Panc1 (cell line): ENCODE measurements at regions of chr2 and their contacts with region 1.

Region 1: GRCh38 chr2:25991965-25992364 is 9.7 kb upstream of the KIF3C start:
- DNase-seq: no peak
- ATAC-seq: peak; percentile 67
- H3K4me3 ChIP-seq: no peak overlapping the region
- H3K27ac ChIP-seq: peak overlapping the region; percentile 40
- H3K4me1 ChIP-seq: peaks cover 6% of the 10 kb centered on the region; the same call in 1 of the 2 replicates
- H3K27me3 ChIP-seq: no peaks in the 10 kb centered on the region
- CTCF ChIP-seq: no peak

Region 2: GRCh38 chr2:26033818-26034636 is 42.1 kb after region 1 on chr2 and contains the start of gene RAB10:
- CTCF ChIA-PET with region 1: interaction called, 7 read pairs
- POLR2A ChIA-PET with region 1: interaction called, 3 read pairs
- in situ Hi-C with region 1: no loop called
- intact Hi-C with region 1: loop called (anchors 2 kb)
- DNase-seq: peak; percentile 95
- ATAC-seq: peak; percentile 97
- H3K4me3 ChIP-seq: peak within 1 kb of the TSS; percentile 83 to 100
- H3K27ac ChIP-seq: peak within 1 kb of the TSS; percentile 92
- H3K4me1 ChIP-seq: peaks cover 6% of the 10 kb centered on the region
- H3K27me3 ChIP-seq: no peaks in the 10 kb centered on the region
- CTCF ChIP-seq: no peak
- total RNA-seq, gene RAB10: 208 TPM

Region 3: GRCh38 chr2:26172871-26173775 is 181.2 kb after region 1 on chr2 and contains the start of gene GAREM2:
- CTCF ChIA-PET with region 1: interaction called, 10 read pairs
- POLR2A ChIA-PET with region 1: no interaction called
- in situ Hi-C with region 1: no loop called
- intact Hi-C with region 1: no loop called
- DNase-seq: no peak
- ATAC-seq: peak; percentile 55
- H3K4me3 ChIP-seq: peak within 1 kb of the TSS; percentile 47 to 54
- H3K27ac ChIP-seq: no peak within 1 kb of the TSS
- H3K4me1 ChIP-seq: peaks cover 6% of the 10 kb centered on the region
- H3K27me3 ChIP-seq: no peaks in the 10 kb centered on the region
- CTCF ChIP-seq: no peak
- total RNA-seq, gene GAREM2: 12.4 TPM